ENCODE measurements at regions of chr9 and their contacts with region 1.

Region 1: DNA sequence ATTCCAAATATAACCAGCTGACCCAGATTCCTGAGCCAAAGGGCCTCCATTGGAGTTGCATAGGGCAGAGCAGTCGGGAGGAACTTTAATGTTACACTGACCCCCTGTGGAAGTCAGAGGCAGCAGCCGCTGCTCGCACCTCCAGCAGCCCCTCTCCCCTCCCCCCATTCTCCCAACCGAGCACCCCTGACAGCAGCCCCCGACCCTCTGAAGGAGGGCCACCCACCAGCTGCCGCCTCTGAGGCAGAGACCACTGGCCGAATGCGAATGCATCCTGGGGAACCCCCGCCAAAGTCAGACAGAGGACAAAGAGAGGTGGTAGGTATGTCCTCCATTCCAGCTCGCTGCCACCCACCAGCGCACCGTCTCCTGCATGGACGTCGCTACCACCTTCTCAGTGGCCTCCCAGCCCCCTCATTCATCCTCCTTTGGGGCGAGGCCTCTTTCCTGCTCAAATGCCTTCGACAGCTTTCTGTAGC is 231.0 kb downstream of the CDK5RAP2 start:
- DNase-seq: peak; percentile 58
- H3K4me3 Mint-ChIP-seq: no peak overlapping the region
- H3K27ac Mint-ChIP-seq: no peak overlapping the region
- H3K4me1 Mint-ChIP-seq: no peaks in the 10 kb centered on the region
- H3K27me3 Mint-ChIP-seq: peaks cover 4% of the 10 kb centered on the region

Region 2: DNA sequence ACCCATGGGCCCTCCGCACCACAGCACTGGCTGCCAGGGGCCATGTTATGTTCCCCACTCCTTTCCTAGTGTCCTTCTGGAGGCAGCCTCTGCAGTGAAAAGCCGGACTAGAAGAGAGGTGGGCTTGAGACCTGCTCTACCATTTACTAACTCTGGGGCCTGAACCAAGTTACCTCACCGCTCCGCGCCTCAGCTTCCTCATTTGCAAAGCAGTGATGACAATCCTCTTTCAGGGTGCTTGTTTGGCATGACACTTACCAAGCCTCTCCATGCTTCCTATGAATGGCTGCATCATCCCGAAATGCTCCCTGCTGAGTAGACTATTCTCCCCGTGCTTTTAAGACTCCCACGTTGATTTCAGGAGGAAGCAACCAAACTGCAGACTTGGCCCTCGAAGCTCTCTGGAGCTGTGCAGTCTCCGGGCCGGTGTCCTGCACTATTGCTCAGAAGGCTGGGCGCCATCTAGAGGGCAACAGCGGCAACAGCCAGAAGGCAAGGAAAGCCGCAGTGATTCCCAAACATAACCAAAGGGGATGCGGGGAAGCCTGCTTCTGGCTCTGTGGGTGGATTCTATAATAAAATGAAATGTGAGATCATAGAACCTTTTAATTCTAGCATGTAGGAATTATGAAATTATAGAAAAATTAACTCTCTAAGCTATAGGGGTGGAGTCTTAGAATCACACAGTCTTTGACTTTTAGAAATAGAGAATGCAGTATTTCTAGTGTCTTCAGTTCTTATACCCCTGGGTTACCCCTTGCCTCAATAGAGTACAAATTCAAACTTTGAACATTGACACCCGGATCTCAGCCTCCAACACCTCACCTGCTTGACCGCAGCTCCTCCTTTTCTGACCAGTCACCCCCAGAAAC is 379.9 kb before region 1 on chr9:
- intact Hi-C with region 1: loop called (anchors 10 kb)
- DNase-seq: peak; percentile 84
- H3K4me3 Mint-ChIP-seq: no peak overlapping the region
- H3K27ac Mint-ChIP-seq: no peak overlapping the region
- H3K4me1 Mint-ChIP-seq: peaks cover 2% of the 10 kb centered on the region
- H3K27me3 Mint-ChIP-seq: peaks cover 1% of the 10 kb centered on the region

Region 3: DNA sequence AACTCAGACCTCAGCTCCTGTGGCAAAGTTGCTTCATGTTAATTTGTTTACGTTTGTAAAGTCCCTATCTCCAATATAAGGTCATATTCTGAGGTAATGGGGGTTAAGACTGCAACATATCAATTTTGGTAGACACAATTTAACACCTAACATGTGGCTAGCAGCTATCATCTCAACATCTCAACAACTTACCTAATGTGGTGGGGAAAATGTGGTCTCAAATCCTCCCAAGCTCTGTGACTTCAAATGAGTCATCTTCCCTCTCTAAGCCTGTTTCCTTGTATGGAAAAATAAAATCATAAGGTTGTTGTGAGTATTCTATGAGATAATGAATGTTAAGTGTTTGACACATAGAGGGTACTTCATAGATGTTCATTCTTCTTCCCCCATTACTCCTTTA is 212.3 kb before region 1 on chr9:
- intact Hi-C with region 1: no loop called
- DNase-seq: no peak
- H3K4me3 Mint-ChIP-seq: no peak overlapping the region
- H3K27ac Mint-ChIP-seq: no peak overlapping the region
- H3K4me1 Mint-ChIP-seq: no peaks in the 10 kb centered on the region
- H3K27me3 Mint-ChIP-seq: no peaks in the 10 kb centered on the region

Region 4: GRCh38 chr9:120383999-120384924 is 35.3 kb after region 1 on chr9:
- intact Hi-C with region 1: no loop called
- DNase-seq: no peak
- H3K4me3 Mint-ChIP-seq: no peak overlapping the region
- H3K27ac Mint-ChIP-seq: no peak overlapping the region
- H3K4me1 Mint-ChIP-seq: no peaks in the 10 kb centered on the region
- H3K27me3 Mint-ChIP-seq: no peaks in the 10 kb centered on the region

Region 5: GRCh38 chr9:120477521-120478001 is 128.6 kb after region 1 on chr9:
- intact Hi-C with region 1: loop called (anchors 1 kb)
- DNase-seq: peak; percentile 83
- H3K4me3 Mint-ChIP-seq: no peak overlapping the region
- H3K27ac Mint-ChIP-seq: peak overlapping the region; percentile 29
- H3K4me1 Mint-ChIP-seq: peaks cover 5% of the 10 kb centered on the region
- H3K27me3 Mint-ChIP-seq: no peaks in the 10 kb centered on the region